ENCODE measurements at regions of chr19 and their contacts with region 1.

Region 1: GRCh38 chr19:51712460-51713083 is 11.2 kb downstream of the HAS1 start:
- DNase-seq: peak; percentile 79
- H3K4me3 Mint-ChIP-seq: no peak overlapping the region
- H3K27ac Mint-ChIP-seq: peak overlapping the region; percentile 13
- H3K4me1 Mint-ChIP-seq: peaks cover 43% of the 10 kb centered on the region
- H3K27me3 Mint-ChIP-seq: no peaks in the 10 kb centered on the region
- CTCF ChIP-seq: peak; percentile 75

Region 2: GRCh38 chr19:51807111-51807701 is 94.6 kb after region 1 on chr19:
- CTCF ChIA-PET with region 1: interaction called, 18 read pairs
- POLR2A ChIA-PET with region 1: no interaction called
- intact Hi-C with region 1: no loop called
- DNase-seq: no peak
- H3K4me3 Mint-ChIP-seq: no peak overlapping the region
- H3K27ac Mint-ChIP-seq: no peak overlapping the region
- H3K4me1 Mint-ChIP-seq: peaks cover 29% of the 10 kb centered on the region
- H3K27me3 Mint-ChIP-seq: no peaks in the 10 kb centered on the region
- CTCF ChIP-seq: no peak

Region 3: DNA sequence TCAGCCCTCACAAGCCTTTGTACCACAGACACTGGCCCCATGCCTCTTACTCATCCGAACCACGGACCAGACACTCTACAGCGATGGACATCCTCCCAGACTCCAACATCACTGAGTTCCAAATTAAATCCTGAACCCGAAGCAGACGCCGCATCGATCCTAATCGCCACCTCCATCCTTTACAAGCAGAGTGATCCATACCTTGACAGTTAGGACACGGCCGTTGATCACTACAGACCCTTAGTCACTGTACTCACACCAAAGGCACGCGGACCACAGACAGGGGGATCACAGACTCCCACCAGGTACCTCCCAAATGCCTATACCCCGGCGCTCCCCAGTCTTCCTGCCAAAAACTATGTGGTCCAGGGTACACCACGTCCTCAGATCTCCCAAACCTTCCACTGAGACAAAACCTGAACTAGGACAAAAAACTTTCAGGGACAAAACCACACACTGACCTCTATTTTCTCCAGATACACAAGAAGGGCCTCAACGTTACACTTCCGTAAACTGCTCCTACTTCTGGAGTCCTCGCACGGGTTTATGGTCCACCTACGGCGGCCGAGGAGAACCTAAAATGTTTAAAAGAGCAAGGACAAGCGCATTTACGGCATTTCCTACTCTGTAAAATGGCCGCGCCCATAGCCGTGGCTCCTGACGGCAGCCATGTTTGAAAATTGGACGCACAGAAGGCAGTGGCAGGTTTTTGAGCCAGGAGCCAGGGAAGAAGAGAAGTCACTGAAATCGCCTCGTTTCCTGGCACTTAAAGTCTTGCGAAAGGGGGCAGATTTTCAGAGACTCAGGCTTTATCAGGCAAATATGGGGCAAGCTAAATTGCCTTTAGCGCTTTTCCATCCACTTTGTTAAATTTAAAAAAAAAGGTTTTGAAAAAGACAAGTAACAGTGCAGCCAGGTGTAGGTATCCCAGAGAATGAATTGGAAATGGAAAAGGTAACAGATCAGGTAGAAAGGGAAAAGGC is 274.0 kb after region 1 on chr19 and contains the start of gene ZNF350:
- CTCF ChIA-PET with region 1: no interaction called
- POLR2A ChIA-PET with region 1: no interaction called
- intact Hi-C with region 1: no loop called
- DNase-seq: peak; percentile 94
- H3K4me3 Mint-ChIP-seq: peak within 1 kb of the TSS; percentile 88
- H3K27ac Mint-ChIP-seq: peak within 1 kb of the TSS; percentile 96
- H3K4me1 Mint-ChIP-seq: no peaks in the 10 kb centered on the region
- H3K27me3 Mint-ChIP-seq: no peaks in the 10 kb centered on the region
- CTCF ChIP-seq: no peak
- total RNA-seq, gene ZNF350: 7.0 and 8.9 TPM in 2 replicates

Measured in MCF 10A (cell line).